Motor neuron (in vitro differentiated cells): ENCODE measurements at regions of chr2 and their contacts with region 1.

Region 1: DNA sequence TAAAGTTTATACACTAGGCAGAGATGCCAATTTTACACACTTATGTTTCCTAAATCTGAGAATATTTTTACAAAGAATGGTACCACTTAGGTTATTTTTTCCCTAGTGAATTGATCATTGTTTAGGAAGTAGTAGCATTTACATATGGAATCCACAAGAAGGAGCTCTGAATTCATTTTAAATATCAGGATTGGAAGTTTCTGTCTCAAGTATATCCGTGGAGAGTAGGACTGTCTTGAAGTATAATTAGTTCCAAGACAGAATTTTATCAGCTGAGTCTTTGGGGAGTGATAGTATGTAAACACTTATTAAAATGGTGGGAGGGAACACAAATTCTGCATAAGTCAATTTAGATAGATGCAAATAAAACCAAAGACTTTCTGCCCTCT is 82.3 kb upstream of the FAM98A start:
- ATAC-seq: peak in 4 of 8 experiments; percentile 30 to 85 (median 72)
- H3K4me3 ChIP-seq: no peak overlapping the region
- H3K27ac ChIP-seq: no peak overlapping the region
- H3K4me1 ChIP-seq: peaks cover 3 to 4% of the 10 kb centered on the region in 2 donors

Region 2: DNA sequence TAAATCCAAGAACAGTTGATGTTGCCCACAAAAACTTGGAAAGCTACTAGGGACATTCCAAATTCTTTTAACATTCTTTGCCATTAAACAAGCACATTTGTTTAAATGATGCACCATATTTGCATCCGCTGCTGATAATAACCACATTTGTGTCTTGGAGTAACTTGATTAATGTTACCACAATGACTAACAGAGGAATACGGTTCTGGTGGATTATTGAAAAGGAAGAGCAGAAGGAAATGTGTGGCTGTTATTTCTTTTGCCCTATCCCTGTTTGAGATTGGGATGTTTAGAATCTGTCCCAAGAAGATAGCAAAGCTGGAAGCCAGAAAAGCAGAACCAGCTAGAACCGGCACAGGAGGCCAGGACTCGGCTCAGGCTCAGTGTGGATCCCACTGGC is 244.1 kb before region 1 on chr2:
- in situ Hi-C with region 1: no loop called
- ATAC-seq: peak in 2 of 8 experiments; percentile 77 to 80
- H3K4me3 ChIP-seq: no peak overlapping the region
- H3K27ac ChIP-seq: no peak overlapping the region
- H3K4me1 ChIP-seq: no peaks in the 10 kb centered on the region

Region 3: GRCh38 chr2:33933203-33933602 is 251.8 kb after region 1 on chr2:
- in situ Hi-C with region 1: no loop called
- ATAC-seq: no peak
- H3K4me3 ChIP-seq: no peak overlapping the region
- H3K27ac ChIP-seq: no peak overlapping the region
- H3K4me1 ChIP-seq: no peaks in the 10 kb centered on the region

Region 4: GRCh38 chr2:34096562-34097171 is 415.3 kb after region 1 on chr2:
- in situ Hi-C with region 1: loop called in 1 of 9 experiments (anchors 25 kb)
- ATAC-seq: peak; percentile 61 to 84 (median 70)
- H3K4me3 ChIP-seq: no peak overlapping the region
- H3K27ac ChIP-seq: no peak overlapping the region
- H3K4me1 ChIP-seq: no peaks in the 10 kb centered on the region

Region 5: GRCh38 chr2:35410431-35411061 is 1729.2 kb after region 1 on chr2:
- in situ Hi-C with region 1: loop called in 1 of 9 experiments (anchors 25 kb)
- ATAC-seq: peak in 3 of 8 experiments; percentile 18 to 55 (median 30)
- H3K4me3 ChIP-seq: no peak overlapping the region
- H3K27ac ChIP-seq: no peak overlapping the region
- H3K4me1 ChIP-seq: no peaks in the 10 kb centered on the region